A549 (cell line): ENCODE measurements at regions of chr1 and their contacts with region 1.

Region 1: DNA sequence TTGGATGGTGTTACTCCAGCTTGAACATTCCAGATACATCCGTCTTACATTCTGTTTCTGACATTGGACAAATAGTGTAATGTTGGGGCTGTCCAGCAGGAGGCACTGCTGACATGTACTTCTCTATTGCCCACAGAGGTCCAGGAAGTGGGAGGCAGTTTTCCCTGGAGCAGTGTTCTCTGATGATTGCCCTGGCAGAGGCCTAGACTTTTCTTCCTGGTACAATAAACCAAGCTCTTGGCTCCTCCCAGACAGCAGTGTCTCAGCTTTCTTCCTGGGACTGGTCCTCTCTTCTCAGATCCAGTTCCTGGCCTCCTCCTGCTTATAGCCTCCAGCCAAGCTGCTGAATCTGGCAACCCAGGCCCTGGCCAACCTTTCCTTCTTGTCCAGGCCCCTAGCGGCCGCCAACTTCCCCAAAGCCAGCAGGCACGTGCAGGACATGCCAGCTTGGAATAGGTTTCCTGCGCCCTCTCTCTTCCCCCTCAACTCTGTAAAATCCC is 14.9 kb upstream of the IFNLR1 start:
- DNase-seq: peak; percentile 62 to 91
- ATAC-seq: peak; percentile 85 to 94
- H3K4me3 ChIP-seq: no peak overlapping the region
- H3K27ac ChIP-seq: peak overlapping the region; percentile 84 to 86
- H3K4me1 ChIP-seq: peaks cover 22% of the 10 kb centered on the region
- CTCF ChIP-seq: peak; percentile 91
- EP300 ChIP-seq: no peak
- POLR2A ChIP-seq: no peak
- RAD21 ChIP-seq: peak; percentile 95 to 96

Region 2: DNA sequence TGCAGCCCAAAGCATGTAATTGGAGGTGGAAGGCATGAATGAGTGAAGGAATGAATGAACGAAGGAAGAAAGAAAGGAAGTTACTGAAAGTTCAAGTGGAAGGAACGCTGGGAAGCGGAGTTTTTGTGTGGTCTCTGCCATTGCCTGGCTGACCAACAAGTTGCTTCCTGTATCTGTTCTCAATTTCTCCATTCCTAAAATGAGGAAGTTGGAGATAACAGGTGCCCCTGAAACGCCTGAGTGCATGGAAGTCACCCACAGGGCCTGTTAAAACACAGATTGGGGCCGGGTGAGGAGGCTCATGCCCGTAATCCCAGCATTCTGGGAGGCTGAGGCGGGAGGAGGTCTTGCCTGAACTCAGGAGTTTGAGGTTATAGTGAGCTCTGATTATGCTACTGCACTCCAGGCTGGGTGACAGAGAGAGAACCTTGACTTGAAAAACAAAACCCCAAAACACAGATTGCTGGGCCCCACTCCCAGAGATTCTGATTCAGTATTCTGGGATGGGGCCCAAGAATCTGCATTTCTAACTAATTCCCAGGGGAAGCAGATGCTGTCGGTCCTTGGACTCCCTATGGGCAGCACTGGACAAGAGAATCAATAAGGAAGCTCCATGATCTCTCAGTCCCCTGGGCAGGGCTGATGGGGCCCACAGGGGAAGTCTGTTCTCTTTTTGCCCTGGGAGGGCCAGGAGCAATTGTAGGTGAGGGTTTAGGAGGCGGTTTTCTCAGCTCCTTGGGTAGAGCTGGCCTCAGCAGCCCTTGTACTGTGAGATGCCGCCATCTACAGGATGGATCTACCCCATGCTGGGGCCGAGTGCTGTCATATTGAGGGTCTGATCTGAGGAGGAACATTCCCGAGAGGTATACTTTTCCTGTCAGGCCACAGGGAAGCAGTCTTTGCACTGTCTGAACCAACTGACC is 285.5 kb before region 1 on chr1:
- CTCF ChIA-PET with region 1: no interaction called
- POLR2A ChIA-PET with region 1: no interaction called
- DNase-seq: peak; percentile 57 to 81
- ATAC-seq: peak; percentile 96 to 97
- H3K4me3 ChIP-seq: no peak overlapping the region
- H3K27ac ChIP-seq: peak overlapping the region in 1 of 2 experiments; percentile 63; a peak in 2 of 6 replicates
- H3K4me1 ChIP-seq: peaks cover 16% of the 10 kb centered on the region
- CTCF ChIP-seq: peak; percentile 61
- EP300 ChIP-seq: no peak
- POLR2A ChIP-seq: no peak
- RAD21 ChIP-seq: peak; percentile 72 to 85

Region 3: GRCh38 chr1:24018611-24019580 is 183.1 kb before region 1 on chr1:
- CTCF ChIA-PET with region 1: no interaction called
- POLR2A ChIA-PET with region 1: no interaction called
- DNase-seq: peak; percentile 90 to 98
- ATAC-seq: peak; percentile 86 to 93
- H3K4me3 ChIP-seq: peak overlapping the region; percentile 17; the same call in 1 of the 3 replicates
- H3K27ac ChIP-seq: peak overlapping the region; percentile 96 to 99
- H3K4me1 ChIP-seq: peaks cover 79% of the 10 kb centered on the region
- CTCF ChIP-seq: no peak
- EP300 ChIP-seq: peak in 1 of 2 experiments; percentile 57; a peak in 1 of 5 replicates
- POLR2A ChIP-seq: no peak
- RAD21 ChIP-seq: peak; percentile 22 to 34; a peak in 2 of 5 replicates

Region 4: GRCh38 chr1:24089743-24090555 is 112.0 kb before region 1 on chr1:
- CTCF ChIA-PET with region 1: no interaction called
- POLR2A ChIA-PET with region 1: no interaction called
- DNase-seq: no peak
- ATAC-seq: no peak
- H3K4me3 ChIP-seq: no peak overlapping the region
- H3K27ac ChIP-seq: no peak overlapping the region
- H3K4me1 ChIP-seq: no peaks in the 10 kb centered on the region
- CTCF ChIP-seq: no peak
- EP300 ChIP-seq: no peak
- POLR2A ChIP-seq: no peak
- RAD21 ChIP-seq: no peak

Region 5: GRCh38 chr1:24150234-24151174 is 51.5 kb before region 1 on chr1:
- CTCF ChIA-PET with region 1: interaction called, 43 read pairs
- POLR2A ChIA-PET with region 1: no interaction called
- DNase-seq: peak; percentile 76 to 89
- ATAC-seq: peak; percentile 95 to 98
- H3K4me3 ChIP-seq: peak overlapping the region; percentile 34
- H3K27ac ChIP-seq: peak overlapping the region; percentile 65 to 83
- H3K4me1 ChIP-seq: peaks cover 12% of the 10 kb centered on the region
- CTCF ChIP-seq: peak; percentile 64
- EP300 ChIP-seq: no peak
- POLR2A ChIP-seq: no peak
- RAD21 ChIP-seq: peak; percentile 58 to 65

Region 6: DNA sequence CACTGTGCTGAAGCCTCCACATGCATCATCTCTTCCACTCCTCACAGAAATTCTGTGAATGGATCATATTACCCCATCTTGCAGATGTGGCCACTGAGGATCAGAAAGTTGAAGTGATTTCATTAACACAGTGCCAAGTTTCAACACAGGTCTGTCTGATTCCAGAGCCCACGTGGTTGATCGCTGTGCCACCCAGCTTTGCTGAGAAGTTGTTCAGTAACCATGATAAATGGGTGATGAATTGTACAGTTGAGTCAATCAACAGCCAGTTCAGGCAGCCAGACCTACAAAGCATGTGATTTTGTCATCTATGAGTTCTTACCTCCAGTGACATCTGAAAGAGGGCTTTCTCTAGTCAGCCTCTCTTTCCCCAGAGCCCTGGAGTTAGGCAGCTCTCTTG is 55.4 kb after region 1 on chr1:
- CTCF ChIA-PET with region 1: interaction called, 13 read pairs
- POLR2A ChIA-PET with region 1: no interaction called
- DNase-seq: no peak
- ATAC-seq: no peak
- H3K4me3 ChIP-seq: no peak overlapping the region
- H3K27ac ChIP-seq: no peak overlapping the region
- H3K4me1 ChIP-seq: 0 out of 3 replicates have a peak, but pooled peaks cover 4% of the 10 kb centered on the region
- CTCF ChIP-seq: no peak
- EP300 ChIP-seq: no peak
- POLR2A ChIP-seq: no peak
- RAD21 ChIP-seq: no peak

Region 7: GRCh38 chr1:24289937-24290595 is 88.1 kb after region 1 on chr1:
- CTCF ChIA-PET with region 1: interaction called, 52 read pairs
- POLR2A ChIA-PET with region 1: no interaction called
- DNase-seq: peak; percentile 51 to 88
- ATAC-seq: peak; percentile 51 to 76; a peak in 5 of 6 replicates
- H3K4me3 ChIP-seq: no peak overlapping the region
- H3K27ac ChIP-seq: peak overlapping the region; percentile 68 to 86
- H3K4me1 ChIP-seq: peaks cover 58% of the 10 kb centered on the region
- CTCF ChIP-seq: no peak
- EP300 ChIP-seq: no peak
- POLR2A ChIP-seq: no peak
- RAD21 ChIP-seq: no peak

Region 8: DNA sequence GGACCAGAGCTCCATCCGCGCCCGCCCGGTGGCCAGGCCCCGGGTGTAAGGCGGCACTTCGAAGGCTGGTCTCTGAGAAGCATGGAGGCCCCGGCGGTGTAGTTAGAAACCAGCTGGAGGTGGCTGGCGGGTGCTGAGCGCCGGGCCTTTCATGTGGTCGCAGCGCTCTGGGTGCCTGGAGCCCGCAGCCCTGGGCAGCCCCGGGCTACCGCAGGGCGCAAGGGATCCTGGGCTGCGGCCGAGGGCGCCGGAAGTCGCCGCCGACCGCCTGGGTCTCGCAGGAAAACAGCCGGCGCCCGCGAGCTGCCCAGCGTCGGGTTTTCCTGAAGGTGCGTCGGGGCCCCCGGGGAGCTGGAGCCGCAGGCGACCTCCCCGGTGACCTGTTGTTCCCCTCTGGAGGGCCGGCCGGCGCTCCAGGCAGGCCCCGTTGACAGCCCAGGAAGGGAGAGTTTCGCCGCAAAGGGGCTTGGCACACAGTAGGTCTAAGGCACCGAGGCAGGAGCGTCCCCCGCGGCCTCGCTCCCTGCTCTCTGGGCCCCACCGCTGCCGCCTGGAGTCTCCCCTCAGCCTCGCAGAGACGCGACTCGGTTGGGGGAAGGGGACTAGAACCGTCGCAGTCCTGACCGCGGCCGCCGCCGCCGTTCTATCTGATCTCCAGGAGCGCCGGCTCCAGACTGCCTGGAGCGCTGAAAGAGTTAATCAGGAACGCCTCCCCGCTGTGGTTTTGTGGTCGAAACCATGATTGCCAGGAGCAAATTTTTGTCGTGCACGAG is 119.9 kb after region 1 on chr1:
- CTCF ChIA-PET with region 1: interaction called, 16 read pairs
- POLR2A ChIA-PET with region 1: no interaction called
- DNase-seq: no peak
- ATAC-seq: no peak
- H3K4me3 ChIP-seq: no peak overlapping the region
- H3K27ac ChIP-seq: no peak overlapping the region
- H3K4me1 ChIP-seq: peaks cover 25% of the 10 kb centered on the region
- CTCF ChIP-seq: no peak
- EP300 ChIP-seq: no peak
- POLR2A ChIP-seq: no peak
- RAD21 ChIP-seq: no peak

Region 9: GRCh38 chr1:24364975-24365678 is 163.1 kb after region 1 on chr1:
- CTCF ChIA-PET with region 1: interaction called, 28 read pairs
- POLR2A ChIA-PET with region 1: no interaction called
- DNase-seq: peak; percentile 83 to 85
- ATAC-seq: peak; percentile 83 to 90
- H3K4me3 ChIP-seq: no peak overlapping the region
- H3K27ac ChIP-seq: peak overlapping the region; percentile 71 to 86
- H3K4me1 ChIP-seq: peaks cover 40% of the 10 kb centered on the region
- CTCF ChIP-seq: no peak
- EP300 ChIP-seq: no peak
- POLR2A ChIP-seq: no peak
- RAD21 ChIP-seq: 0 out of 5 replicates have a peak, but pooled peaks of 1 of the 2 experiments have one; percentile 13

Region 10: DNA sequence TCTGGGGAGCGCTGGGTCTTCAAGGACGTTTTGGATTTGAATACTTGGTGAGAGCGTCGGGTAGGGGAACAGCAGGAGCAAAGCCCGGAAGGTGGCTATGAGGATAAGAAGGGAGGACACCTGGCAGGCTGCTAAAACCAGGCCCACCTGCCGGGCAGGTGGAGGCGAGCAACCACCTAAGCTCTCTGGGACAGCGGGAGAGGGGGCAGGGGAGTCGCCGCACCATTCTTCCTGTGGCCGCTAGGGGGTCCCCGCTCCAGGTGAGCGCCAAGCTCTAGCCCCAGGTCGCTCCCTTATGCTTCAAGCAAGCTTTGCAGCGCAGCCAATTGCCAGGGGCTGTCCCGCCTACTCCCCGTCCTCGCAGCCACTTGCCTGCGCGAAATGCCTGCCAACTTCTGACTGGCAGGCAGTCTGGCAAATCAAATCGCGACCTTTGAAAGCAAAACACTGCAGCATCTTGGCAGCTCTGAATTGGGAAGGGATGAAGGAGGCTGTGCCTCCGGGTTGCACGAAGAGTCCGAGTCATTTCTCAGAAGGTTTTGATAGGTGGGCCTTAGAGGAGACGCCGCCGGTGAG is 213.4 kb after region 1 on chr1 and contains the start of gene NIPAL3:
- CTCF ChIA-PET with region 1: interaction called, 11 read pairs
- POLR2A ChIA-PET with region 1: no interaction called
- DNase-seq: peak; percentile 85 to 99
- ATAC-seq: peak; percentile 91 to 94
- H3K4me3 ChIP-seq: peak within 1 kb of the TSS; percentile 67
- H3K27ac ChIP-seq: peak within 1 kb of the TSS; percentile 64 to 95
- H3K4me1 ChIP-seq: peaks cover 51% of the 10 kb centered on the region
- CTCF ChIP-seq: peak; percentile 65
- EP300 ChIP-seq: no peak
- POLR2A ChIP-seq: no peak
- RAD21 ChIP-seq: peak; percentile 48 to 61
- polyA plus RNA-seq, gene NIPAL3: 10.4 and 14.7 TPM in 2 replicates